Right cardiac atrium (tissue), 5 donors: ENCODE measurements at regions of chr7 and their contacts with region 1.

Region 1: GRCh38 chr7:29408841-29409243 is 154.8 kb upstream of the PRR15 start:
- DNase-seq: no peak
- ATAC-seq: peak; percentile 40 to 70
- H3K4me3 ChIP-seq: no peak overlapping the region
- H3K27ac ChIP-seq: no peak overlapping the region
- H3K4me1 ChIP-seq: no peaks in the 10 kb centered on the region
- H3K27me3 ChIP-seq: peaks cover 2% of the 10 kb centered on the region

Region 2: DNA sequence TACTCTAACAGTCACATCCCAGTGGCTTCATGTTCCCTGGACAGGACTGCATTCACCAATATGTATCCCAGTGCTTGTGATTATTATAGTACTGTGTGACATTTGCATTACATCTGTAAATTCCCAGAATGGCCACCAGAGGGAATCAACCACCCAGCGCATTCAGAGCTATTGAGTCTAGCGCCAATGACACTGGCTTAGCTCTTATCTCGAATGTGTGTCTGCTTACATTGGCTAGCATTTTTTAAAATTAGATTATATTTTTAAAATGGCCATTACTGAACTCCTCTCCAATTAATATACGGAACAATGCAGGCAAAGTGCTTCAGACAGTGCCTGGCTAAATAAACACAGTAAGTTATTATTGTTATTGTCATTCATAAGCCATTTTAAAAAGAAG is 487.0 kb before region 1 on chr7:
- intact Hi-C with region 1: loop called (anchors 2 to 10 kb)
- DNase-seq: no peak
- ATAC-seq: peak; percentile 89 to 92
- H3K4me3 ChIP-seq: no peak overlapping the region
- H3K27ac ChIP-seq: no peak overlapping the region
- H3K4me1 ChIP-seq: no peaks in the 10 kb centered on the region
- H3K27me3 ChIP-seq: no peaks in the 10 kb centered on the region

Region 3: DNA sequence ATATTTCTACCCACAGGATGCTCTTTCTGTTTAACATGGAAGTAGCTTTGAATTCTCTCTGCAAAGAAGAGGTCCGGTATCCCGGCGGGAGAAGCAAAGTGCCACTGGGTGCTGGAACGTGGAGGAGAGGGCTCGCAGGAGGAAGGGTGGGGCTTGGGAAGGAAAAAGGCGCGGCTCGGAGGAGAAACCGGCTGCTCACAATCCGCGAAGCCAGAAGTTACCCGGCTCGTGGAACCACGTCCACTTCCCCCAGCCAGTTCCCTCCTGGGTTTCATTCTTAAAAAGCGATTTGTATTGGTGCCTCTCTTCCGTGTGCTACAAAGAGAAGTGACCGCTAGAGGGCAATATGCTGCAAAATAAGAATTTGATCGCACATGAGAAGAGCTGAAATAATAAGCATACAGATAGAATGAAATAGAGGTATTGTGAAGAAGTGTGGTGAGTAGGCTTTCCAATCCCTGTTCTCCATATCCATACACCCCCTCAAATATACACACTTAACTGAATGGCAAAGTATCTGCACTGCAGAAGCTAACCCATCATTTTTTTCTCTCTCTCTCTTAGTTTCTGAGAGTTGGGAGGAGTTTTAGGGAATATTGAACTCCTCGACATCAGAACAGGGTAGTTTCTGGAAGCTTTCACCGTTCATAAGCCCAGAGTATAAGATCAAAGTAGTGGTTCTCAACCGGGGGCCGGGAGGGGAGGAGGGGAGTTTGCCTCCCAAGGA is 481.8 kb before region 1 on chr7:
- intact Hi-C with region 1: loop called (anchors 2 to 10 kb)
- DNase-seq: peak; percentile 80 to 88 (median 83)
- ATAC-seq: peak; percentile 92 to 97
- H3K4me3 ChIP-seq: peak overlapping the region; percentile 66
- H3K27ac ChIP-seq: no peak overlapping the region
- H3K4me1 ChIP-seq: no peaks in the 10 kb centered on the region
- H3K27me3 ChIP-seq: no peaks in the 10 kb centered on the region

Region 4: DNA sequence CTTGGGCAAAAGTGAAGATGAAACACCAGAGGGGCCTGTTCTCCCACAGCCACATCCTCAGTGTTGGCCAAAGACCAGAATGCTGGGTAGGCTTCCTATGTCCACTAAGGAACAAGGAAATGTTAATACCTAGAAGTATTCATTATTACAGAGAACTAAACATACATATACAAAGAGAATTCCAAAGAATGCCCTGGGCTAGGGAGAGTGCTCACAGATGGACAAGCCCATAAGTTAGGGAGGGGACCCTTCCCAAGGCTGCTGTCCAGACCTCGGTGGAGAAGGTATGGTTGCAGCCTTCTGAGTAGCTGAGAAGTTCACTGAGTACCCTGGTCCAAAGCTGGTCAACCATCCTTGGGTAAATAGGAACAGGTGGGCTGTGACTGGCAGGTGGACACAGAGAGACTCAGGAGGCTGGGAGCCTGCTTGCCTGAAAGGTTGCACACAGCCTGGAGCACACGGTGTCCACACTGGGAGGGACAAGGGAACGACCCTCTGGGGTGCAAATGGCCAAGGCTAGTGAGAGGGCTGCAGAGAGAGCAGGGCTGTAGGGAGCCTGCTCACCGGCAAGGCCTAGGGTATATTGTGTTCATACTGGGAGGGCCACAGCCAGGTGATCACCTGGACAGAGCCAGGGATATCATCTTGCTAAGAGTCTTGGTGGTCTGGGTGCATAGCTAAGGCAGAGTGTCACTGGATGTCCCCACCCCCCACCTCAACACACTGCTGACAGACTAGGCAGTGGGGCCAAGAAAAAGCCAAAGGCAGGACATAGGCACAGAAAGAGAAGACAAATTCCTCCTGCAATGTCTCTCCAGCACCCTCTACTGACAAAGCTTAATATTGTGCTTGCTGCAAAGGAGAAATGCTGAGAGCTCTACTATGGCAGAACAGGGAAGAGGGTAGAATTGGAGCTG is 302.8 kb before region 1 on chr7:
- intact Hi-C with region 1: loop called in 3 of 4 experiments (anchors 5 kb)
- DNase-seq: peak in 1 of 3 donors; percentile 21
- ATAC-seq: peak; percentile 76 to 78
- H3K4me3 ChIP-seq: no peak overlapping the region
- H3K27ac ChIP-seq: no peak overlapping the region
- H3K4me1 ChIP-seq: no peaks in the 10 kb centered on the region
- H3K27me3 ChIP-seq: no peaks in the 10 kb centered on the region

Region 5: DNA sequence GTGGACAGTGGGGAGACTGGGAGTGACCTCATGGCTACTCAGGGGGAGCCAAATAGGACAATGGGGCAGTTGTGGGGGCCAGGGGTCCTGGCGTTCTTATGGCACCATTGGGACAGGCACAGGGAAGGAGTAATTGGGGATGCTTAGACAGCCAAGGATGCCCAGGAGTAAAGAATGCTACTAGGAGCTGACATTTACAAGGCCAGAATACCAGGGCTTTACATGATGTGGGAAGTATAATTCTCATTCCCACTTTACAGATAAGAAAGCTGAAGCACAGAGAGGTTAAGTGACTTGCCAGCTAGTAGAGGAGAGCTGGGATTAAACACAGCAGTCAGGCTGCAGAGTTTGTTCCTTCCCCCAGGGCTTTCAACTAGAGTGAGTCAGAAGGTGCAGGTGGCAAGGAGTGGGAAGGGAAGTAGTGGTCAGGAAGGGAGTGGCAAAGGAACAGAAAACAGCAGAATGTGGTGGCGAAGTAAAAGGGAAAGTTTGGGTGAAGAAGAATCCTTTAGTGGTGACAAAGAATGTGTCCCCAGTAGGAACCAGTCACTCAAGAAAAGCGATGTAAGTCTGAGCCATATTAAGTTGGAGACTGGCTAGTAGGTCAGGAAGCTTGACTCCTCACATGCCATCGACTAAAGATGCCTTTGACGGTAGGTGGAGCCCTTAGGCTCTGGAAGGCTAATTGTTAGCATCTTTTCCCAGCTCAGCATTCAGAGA is 295.3 kb before region 1 on chr7:
- intact Hi-C with region 1: loop called in 2 of 4 experiments (anchors 5 kb)
- DNase-seq: no peak
- ATAC-seq: peak in 1 of 2 donors; percentile 37
- H3K4me3 ChIP-seq: no peak overlapping the region
- H3K27ac ChIP-seq: no peak overlapping the region
- H3K4me1 ChIP-seq: no peaks in the 10 kb centered on the region
- H3K27me3 ChIP-seq: no peaks in the 10 kb centered on the region

Region 6: DNA sequence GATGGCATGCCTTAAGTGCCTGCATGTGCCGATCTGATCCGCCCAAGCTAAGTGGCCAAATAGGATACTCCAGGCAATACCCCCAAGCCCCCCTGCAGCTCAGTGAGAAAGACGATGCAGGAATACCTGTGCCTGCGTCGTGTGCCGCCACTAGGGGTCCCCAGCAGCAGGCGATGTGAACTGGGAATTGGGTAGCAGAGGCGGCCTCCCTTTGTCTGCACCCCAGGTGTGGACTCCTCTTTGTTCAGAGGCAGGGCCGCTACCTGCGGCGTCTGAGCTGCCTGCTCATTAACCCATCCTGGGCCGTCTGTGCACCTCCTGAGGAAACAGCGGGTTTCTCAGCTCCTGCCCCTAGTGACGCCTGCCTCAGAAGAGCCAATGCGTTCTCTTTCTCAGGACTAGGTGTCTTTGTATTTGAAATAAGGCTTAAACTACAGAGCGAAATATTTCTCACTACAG is 219.1 kb before region 1 on chr7:
- intact Hi-C with region 1: loop called (anchors 2 to 5 kb)
- DNase-seq: peak; percentile 59 to 85 (median 77)
- ATAC-seq: peak; percentile 57 to 80
- H3K4me3 ChIP-seq: no peak overlapping the region
- H3K27ac ChIP-seq: no peak overlapping the region
- H3K4me1 ChIP-seq: no peaks in the 10 kb centered on the region
- H3K27me3 ChIP-seq: no peaks in the 10 kb centered on the region

Region 7: GRCh38 chr7:29381206-29382094 is 27.4 kb before region 1 on chr7:
- intact Hi-C with region 1: no loop called
- DNase-seq: no peak
- ATAC-seq: no peak
- H3K4me3 ChIP-seq: no peak overlapping the region
- H3K27ac ChIP-seq: no peak overlapping the region
- H3K4me1 ChIP-seq: no peaks in the 10 kb centered on the region
- H3K27me3 ChIP-seq: no peaks in the 10 kb centered on the region